ENCODE measurements at regions of chr6 and their contacts with region 1.

Region 1: GRCh38 chr6:105620878-105621277 is 218.0 kb upstream of the PREP start:
- DNase-seq: no peak
- H3K4me3 ChIP-seq: no peak overlapping the region
- H3K27ac ChIP-seq: no peak overlapping the region
- H3K4me1 ChIP-seq: no peaks in the 10 kb centered on the region
- H3K27me3 ChIP-seq: no peaks in the 10 kb centered on the region
- CTCF ChIP-seq: no peak

Region 2: GRCh38 chr6:105651969-105652368 is 31.1 kb after region 1 on chr6:
- CTCF ChIA-PET with region 1: no interaction called
- POLR2A ChIA-PET with region 1: no interaction called
- intact Hi-C with region 1: loop called (anchors 1 kb)
- DNase-seq: no peak
- H3K4me3 ChIP-seq: no peak overlapping the region
- H3K27ac ChIP-seq: no peak overlapping the region
- H3K4me1 ChIP-seq: no peaks in the 10 kb centered on the region
- H3K27me3 ChIP-seq: no peaks in the 10 kb centered on the region
- CTCF ChIP-seq: no peak

Region 3: DNA sequence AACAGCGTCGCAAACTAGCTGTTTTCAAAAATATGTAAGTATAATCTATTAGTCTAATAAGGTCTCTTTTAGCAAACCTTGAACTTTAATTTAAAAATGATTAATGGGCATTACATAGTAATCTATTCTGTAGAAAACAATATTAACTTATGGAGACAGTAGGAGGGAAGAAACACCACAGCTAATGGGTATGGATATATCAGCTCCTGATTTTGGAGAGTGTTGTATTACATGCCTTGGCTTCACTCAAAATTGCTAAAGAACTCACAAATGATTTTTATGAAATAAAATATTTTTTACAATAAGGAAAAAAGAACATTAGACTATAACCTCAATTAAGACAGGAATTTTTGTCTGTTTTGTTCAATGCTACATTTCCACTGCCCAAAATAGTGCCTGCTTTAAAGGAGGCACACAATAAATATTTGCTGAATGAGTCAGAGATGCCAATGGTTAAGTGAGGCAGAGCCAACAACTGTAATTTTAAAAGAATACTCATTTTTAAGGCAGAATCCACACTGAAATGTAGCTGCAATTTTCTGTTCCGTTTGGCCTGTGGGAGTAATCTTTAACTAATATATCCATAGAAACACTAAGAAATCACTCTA is 689.0 kb after region 1 on chr6:
- CTCF ChIA-PET with region 1: no interaction called
- POLR2A ChIA-PET with region 1: interaction called, 10 read pairs
- intact Hi-C with region 1: no loop called
- DNase-seq: peak in 1 of 2 experiments; percentile 73
- H3K4me3 ChIP-seq: no peak overlapping the region
- H3K27ac ChIP-seq: peak overlapping the region; percentile 28
- H3K4me1 ChIP-seq: peaks cover 31% of the 10 kb centered on the region
- H3K27me3 ChIP-seq: no peaks in the 10 kb centered on the region
- CTCF ChIP-seq: no peak